Lower leg skin (tissue), 4 donors: ENCODE measurements at regions of chr2 and their contacts with region 1.

Region 1: GRCh38 chr2:159010340-159010739 is 41.9 kb downstream of the TANC1 start:
- DNase-seq: no peak
- H3K4me3 ChIP-seq: no peak overlapping the region
- CTCF ChIP-seq: no peak
- POLR2A ChIP-seq: no peak

Region 2: DNA sequence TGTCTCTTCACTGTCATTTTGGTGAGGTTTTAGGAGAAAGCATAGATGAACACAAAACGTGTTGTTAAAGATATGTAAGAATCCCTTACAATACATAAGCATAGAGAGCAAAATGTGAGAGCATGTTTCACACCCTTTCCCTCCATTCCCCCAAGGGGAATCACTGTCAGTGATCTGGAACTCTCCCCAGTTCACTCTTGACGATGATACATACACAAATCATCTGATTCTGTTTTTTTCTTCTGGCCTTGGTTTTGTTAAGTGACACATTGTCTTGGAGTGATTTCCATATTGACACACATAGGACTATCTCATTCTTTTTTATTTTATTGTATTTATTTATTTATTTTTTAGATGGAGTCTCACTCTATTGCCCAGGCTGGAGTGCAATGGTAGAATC is 95.6 kb before region 1 on chr2:
- intact Hi-C with region 1: loop called (anchors 10 kb)
- DNase-seq: no peak
- H3K4me3 ChIP-seq: no peak overlapping the region
- CTCF ChIP-seq: no peak
- POLR2A ChIP-seq: no peak